WTC11 (cell line): ENCODE measurements at regions of chr5 and their contacts with region 1.

Region 1: GRCh38 chr5:170357955-170358444 is 31.2 kb downstream of the KCNMB1 start:
- DNase-seq: no peak
- ATAC-seq: no peak
- H3K4me3 Mint-ChIP-seq: no peak overlapping the region
- H3K27ac Mint-ChIP-seq: no peak overlapping the region
- H3K4me1 Mint-ChIP-seq: peaks cover 60% of the 10 kb centered on the region
- H3K27me3 Mint-ChIP-seq: no peaks in the 10 kb centered on the region
- CTCF ChIP-seq: no peak

Region 2: GRCh38 chr5:170327168-170327567 is 30.8 kb before region 1 on chr5:
- CTCF ChIA-PET with region 1: no interaction called
- POLR2A ChIA-PET with region 1: no interaction called
- DNase-seq: no peak
- ATAC-seq: no peak
- H3K4me3 Mint-ChIP-seq: no peak overlapping the region
- H3K27ac Mint-ChIP-seq: no peak overlapping the region
- H3K4me1 Mint-ChIP-seq: peaks cover 16% of the 10 kb centered on the region
- H3K27me3 Mint-ChIP-seq: no peaks in the 10 kb centered on the region
- CTCF ChIP-seq: no peak

Region 3: DNA sequence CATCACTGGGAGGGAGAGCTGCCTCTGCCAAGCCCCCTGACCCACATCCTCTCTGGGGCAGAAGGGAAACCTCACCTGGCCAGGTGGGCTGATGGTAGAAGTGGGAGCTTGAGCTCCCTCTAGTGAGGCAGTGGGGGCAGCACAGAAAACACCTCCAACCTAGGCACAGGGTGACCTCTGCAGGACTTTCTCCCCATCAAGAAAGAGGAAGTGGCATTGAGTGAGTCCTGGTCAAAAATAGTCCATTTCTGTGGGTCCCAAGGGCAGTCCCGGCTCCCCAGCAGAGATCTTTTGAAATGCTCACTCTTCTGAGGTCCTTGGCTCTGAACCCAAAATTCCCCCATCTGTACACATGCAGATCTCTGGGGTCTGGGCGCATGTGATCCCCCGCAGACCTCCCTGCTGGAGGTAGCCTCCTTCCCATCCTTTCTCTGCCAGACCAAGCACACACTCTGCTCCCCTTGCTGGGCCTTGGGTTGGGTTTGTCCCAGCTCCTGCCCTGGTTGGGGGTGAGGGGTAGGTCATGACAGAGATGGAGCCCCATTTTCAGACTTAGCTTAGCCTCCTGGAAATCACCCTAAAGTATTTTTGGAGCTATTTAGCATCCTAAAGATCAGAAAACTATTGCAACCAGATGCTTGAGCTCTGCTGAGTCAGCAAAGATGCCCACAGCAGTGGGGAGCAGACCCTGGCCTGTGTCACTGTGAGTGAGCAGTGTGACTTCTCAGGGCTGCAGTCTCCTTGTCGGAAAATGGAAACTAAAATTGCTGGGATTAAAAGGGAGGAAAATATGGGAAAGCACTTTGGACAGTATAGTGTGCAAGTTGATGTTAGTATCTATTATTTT is 18.8 kb before region 1 on chr5:
- CTCF ChIA-PET with region 1: interaction called, 11 read pairs
- POLR2A ChIA-PET with region 1: no interaction called
- DNase-seq: peak; percentile 64
- ATAC-seq: peak; percentile 84
- H3K4me3 Mint-ChIP-seq: no peak overlapping the region
- H3K27ac Mint-ChIP-seq: no peak overlapping the region
- H3K4me1 Mint-ChIP-seq: peaks cover 58% of the 10 kb centered on the region
- H3K27me3 Mint-ChIP-seq: no peaks in the 10 kb centered on the region; the same call in none of the 2 replicates
- CTCF ChIP-seq: peak; percentile 63

Region 4: GRCh38 chr5:170375283-170375682 is 17.3 kb after region 1 on chr5:
- CTCF ChIA-PET with region 1: no interaction called
- POLR2A ChIA-PET with region 1: no interaction called
- DNase-seq: no peak
- ATAC-seq: no peak
- H3K4me3 Mint-ChIP-seq: no peak overlapping the region
- H3K27ac Mint-ChIP-seq: no peak overlapping the region
- H3K4me1 Mint-ChIP-seq: peaks cover 3% of the 10 kb centered on the region
- H3K27me3 Mint-ChIP-seq: peaks cover 5% of the 10 kb centered on the region
- CTCF ChIP-seq: no peak